ENCODE measurements at regions of chr21 and their contacts with region 1.

Region 1: DNA sequence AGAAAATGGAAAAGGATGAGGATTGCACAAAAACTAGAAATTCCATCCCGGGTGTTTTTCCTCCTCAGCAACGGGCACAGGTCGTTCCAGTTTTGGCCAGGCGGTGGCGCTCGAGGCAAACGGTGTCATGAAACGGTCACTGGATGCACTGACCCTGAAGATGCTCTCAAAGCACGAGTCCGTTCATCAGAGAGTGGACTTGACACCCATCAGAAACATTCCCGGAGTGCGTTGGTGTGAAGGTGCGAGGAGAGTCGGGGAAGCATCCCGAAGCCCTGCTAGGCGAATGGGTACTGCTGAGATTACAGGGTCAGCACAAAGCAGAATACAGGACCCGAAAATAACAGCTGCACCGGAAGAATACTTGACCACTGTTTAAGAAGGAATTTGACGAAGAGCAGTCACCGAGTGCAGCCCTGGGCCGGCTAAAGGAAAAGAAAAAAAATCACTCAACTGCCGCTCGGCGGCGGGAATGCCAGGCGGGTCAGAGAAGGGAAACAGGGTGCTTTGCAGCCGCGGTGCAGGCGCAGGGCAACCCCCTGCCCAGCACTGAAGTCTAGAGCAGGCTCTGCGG is 71.7 kb upstream of the ETS2 start:
- DNase-seq: peak; percentile 69
- ATAC-seq: peak; percentile 54
- H3K4me3 ChIP-seq: peak overlapping the region; percentile 27 to 77 (median 43)
- H3K4me3 Mint-ChIP-seq: peak overlapping the region; percentile 76
- H3K27ac ChIP-seq: no peak overlapping the region
- H3K27ac Mint-ChIP-seq: no peak overlapping the region
- H3K4me1 ChIP-seq: peaks cover 9 to 12% of the 10 kb centered on the region in 2 donors
- H3K4me1 Mint-ChIP-seq: peaks cover 11% of the 10 kb centered on the region
- H3K27me3 ChIP-seq: peaks cover 0 to 14% (median 9%) of the 10 kb centered on the region in 4 experiments
- H3K27me3 Mint-ChIP-seq: peaks cover 23% of the 10 kb centered on the region
- CTCF ChIP-seq: peak; percentile 96

Region 2: GRCh38 chr21:38219049-38219628 is 514.9 kb before region 1 on chr21:
- CTCF ChIA-PET with region 1: no interaction called
- POLR2A ChIA-PET with region 1: no interaction called
- intact Hi-C with region 1: loop called (anchors 5 kb)
- DNase-seq: peak; percentile 58
- ATAC-seq: peak; percentile 41
- H3K4me3 ChIP-seq: no peak overlapping the region
- H3K4me3 Mint-ChIP-seq: no peak overlapping the region
- H3K27ac ChIP-seq: no peak overlapping the region
- H3K27ac Mint-ChIP-seq: no peak overlapping the region
- H3K4me1 ChIP-seq: no peaks in the 10 kb centered on the region
- H3K4me1 Mint-ChIP-seq: no peaks in the 10 kb centered on the region
- H3K27me3 ChIP-seq: no peaks in the 10 kb centered on the region
- H3K27me3 Mint-ChIP-seq: peaks cover 4% of the 10 kb centered on the region
- CTCF ChIP-seq: peak; percentile 89

Region 3: GRCh38 chr21:39132248-39132647 is 398.2 kb after region 1 on chr21:
- CTCF ChIA-PET with region 1: interaction called, 28 read pairs
- POLR2A ChIA-PET with region 1: no interaction called
- intact Hi-C with region 1: no loop called
- DNase-seq: no peak
- ATAC-seq: no peak
- H3K4me3 ChIP-seq: no peak overlapping the region
- H3K4me3 Mint-ChIP-seq: no peak overlapping the region
- H3K27ac ChIP-seq: no peak overlapping the region
- H3K27ac Mint-ChIP-seq: no peak overlapping the region
- H3K4me1 ChIP-seq: no peaks in the 10 kb centered on the region
- H3K4me1 Mint-ChIP-seq: no peaks in the 10 kb centered on the region
- H3K27me3 ChIP-seq: no peaks in the 10 kb centered on the region
- H3K27me3 Mint-ChIP-seq: peaks cover 3% of the 10 kb centered on the region
- CTCF ChIP-seq: no peak

Region 4: GRCh38 chr21:39137248-39138178 is 403.5 kb after region 1 on chr21:
- CTCF ChIA-PET with region 1: interaction called, 28 read pairs
- POLR2A ChIA-PET with region 1: no interaction called
- intact Hi-C with region 1: loop called (anchors 1 kb)
- DNase-seq: no peak
- ATAC-seq: no peak
- H3K4me3 ChIP-seq: no peak overlapping the region
- H3K4me3 Mint-ChIP-seq: no peak overlapping the region
- H3K27ac ChIP-seq: no peak overlapping the region
- H3K27ac Mint-ChIP-seq: no peak overlapping the region
- H3K4me1 ChIP-seq: no peaks in the 10 kb centered on the region
- H3K4me1 Mint-ChIP-seq: no peaks in the 10 kb centered on the region
- H3K27me3 ChIP-seq: no peaks in the 10 kb centered on the region
- H3K27me3 Mint-ChIP-seq: peaks cover 7% of the 10 kb centered on the region
- CTCF ChIP-seq: no peak

Region 5: DNA sequence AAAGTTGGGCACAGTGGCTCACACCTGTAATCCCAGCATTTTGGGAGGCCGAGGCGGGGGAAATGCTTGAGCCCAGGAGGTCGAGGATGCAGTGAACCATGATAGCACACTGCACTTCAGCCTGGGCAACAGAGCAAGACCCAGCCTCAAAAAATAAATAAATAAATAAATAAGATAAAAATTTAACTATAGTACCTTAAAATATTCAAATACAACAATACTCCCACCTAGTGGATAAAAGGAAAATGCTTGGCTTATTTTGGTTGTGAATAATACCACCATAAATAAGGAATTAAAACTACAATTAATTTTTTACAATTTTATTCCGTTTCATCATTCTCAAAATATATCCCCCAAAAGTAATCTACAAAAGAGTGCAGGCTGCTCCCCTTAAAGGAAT is 441.1 kb after region 1 on chr21:
- CTCF ChIA-PET with region 1: interaction called, 22 read pairs
- POLR2A ChIA-PET with region 1: no interaction called
- intact Hi-C with region 1: loop called (anchors 1 kb)
- DNase-seq: peak; percentile 34
- ATAC-seq: no peak
- H3K4me3 ChIP-seq: no peak overlapping the region
- H3K4me3 Mint-ChIP-seq: no peak overlapping the region
- H3K27ac ChIP-seq: no peak overlapping the region
- H3K27ac Mint-ChIP-seq: no peak overlapping the region
- H3K4me1 ChIP-seq: no peaks in the 10 kb centered on the region
- H3K4me1 Mint-ChIP-seq: no peaks in the 10 kb centered on the region
- H3K27me3 ChIP-seq: no peaks in the 10 kb centered on the region
- H3K27me3 Mint-ChIP-seq: no peaks in the 10 kb centered on the region
- CTCF ChIP-seq: peak; percentile 79

Measured in B cell (primary cell).